Ascending aorta (tissue), 2 donors: ENCODE measurements at regions of chr20 and their contacts with region 1.

Region 1: GRCh38 chr20:10603971-10604864 is 69.6 kb downstream of the JAG1 start:
- DNase-seq: peak; percentile 39 to 91
- H3K4me3 ChIP-seq: peak overlapping the region in 1 of 2 donors; percentile 45
- H3K27ac ChIP-seq: peak overlapping the region; percentile 87 to 96
- H3K4me1 ChIP-seq: peaks cover 12 to 42% of the 10 kb centered on the region in 2 donors
- H3K27me3 ChIP-seq: no peaks in the 10 kb centered on the region
- CTCF ChIP-seq: no peak

Region 2: GRCh38 chr20:10578607-10579006 is 25.6 kb before region 1 on chr20:
- intact Hi-C with region 1: no loop called
- DNase-seq: no peak
- H3K4me3 ChIP-seq: no peak overlapping the region
- H3K27ac ChIP-seq: peak overlapping the region; percentile 67 to 80
- H3K4me1 ChIP-seq: peaks cover 0 to 24% of the 10 kb centered on the region in 2 donors
- H3K27me3 ChIP-seq: no peaks in the 10 kb centered on the region
- CTCF ChIP-seq: no peak

Region 3: DNA sequence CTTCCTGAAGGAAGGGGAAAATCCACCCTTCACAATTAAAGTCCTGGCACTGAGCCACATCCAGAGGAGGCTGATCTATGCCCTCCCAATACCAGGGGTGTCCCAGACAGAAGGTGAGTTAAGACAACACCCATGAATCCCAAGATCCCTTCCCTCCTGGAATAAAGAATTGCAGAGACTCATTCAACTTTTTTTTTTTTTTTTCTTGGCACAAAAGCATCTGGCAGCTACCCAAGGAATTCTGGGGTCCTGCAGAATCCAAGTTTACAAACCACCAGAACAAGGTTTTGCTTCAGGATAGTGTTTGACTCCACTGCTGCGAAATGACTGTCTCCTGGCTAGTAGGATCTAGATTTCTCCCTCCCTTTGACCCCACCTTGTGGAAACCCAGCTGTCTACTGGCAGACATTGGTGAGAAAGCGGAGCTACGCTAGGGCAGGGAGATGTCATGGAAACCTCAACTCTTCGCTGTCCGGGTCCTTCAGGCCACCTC is 32.2 kb after region 1 on chr20:
- intact Hi-C with region 1: loop called (anchors 2 kb)
- DNase-seq: peak in 1 of 2 donors; percentile 68
- H3K4me3 ChIP-seq: peak overlapping the region in 1 of 2 donors; percentile 53
- H3K27ac ChIP-seq: peak overlapping the region; percentile 93 to 100
- H3K4me1 ChIP-seq: peaks cover 29 to 57% of the 10 kb centered on the region in 2 donors
- H3K27me3 ChIP-seq: no peaks in the 10 kb centered on the region
- CTCF ChIP-seq: no peak

Region 4: DNA sequence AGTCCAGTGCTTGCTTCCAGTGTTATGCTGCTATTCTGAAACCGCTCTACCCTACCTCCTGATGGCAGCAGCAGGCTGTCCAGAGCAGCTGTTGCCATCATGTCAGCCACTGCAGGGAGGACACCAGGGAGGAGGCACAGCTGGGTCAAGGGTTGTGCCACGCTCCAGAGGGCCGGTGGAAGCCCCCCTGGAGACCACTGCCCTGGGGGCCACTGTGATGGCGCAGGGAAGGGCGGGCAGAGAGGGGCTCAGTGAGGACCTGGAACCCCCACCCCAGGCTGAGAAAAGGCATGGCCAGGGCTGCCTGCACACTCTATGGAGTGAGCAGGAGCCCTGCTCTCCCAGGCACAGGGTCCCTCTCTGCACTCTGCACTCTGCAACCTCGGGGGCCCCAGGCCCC is 1042.1 kb after region 1 on chr20:
- intact Hi-C with region 1: no loop called
- DNase-seq: no peak
- H3K4me3 ChIP-seq: no peak overlapping the region
- H3K27ac ChIP-seq: no peak overlapping the region
- H3K4me1 ChIP-seq: no peaks in the 10 kb centered on the region
- H3K27me3 ChIP-seq: no peaks in the 10 kb centered on the region
- CTCF ChIP-seq: no peak